HepG2 (cell line): ENCODE measurements at regions of chr5 and their contacts with region 1.

Region 1: DNA sequence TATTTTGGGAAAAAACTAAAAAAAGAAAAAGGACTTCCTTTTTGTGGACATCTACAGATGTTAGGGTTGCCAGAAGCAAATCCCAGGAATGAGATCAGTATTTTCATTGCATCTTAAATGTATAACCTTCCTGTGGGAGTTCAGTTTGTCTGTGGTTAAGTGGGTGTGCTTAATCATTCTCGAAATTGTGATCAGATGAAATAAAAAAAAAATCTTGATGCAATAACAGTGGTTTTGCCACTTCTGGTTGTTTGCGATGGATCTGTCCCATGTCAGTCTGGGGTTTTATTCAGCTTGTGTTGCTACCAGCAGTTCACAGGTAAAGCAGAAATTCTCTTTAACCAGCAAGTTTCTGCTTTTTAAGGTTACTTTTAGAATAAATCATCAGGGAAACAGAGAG is 179.0 kb downstream of the MAN2A1 start:
- DNase-seq: no peak
- ATAC-seq: no peak
- H3K4me3 ChIP-seq: no peak overlapping the region
- H3K27ac ChIP-seq: no peak overlapping the region
- H3K4me1 ChIP-seq: no peaks in the 10 kb centered on the region
- H3K27me3 ChIP-seq: no peaks in the 10 kb centered on the region
- CTCF ChIP-seq: no peak
- EP300 ChIP-seq: no peak
- POLR2A ChIP-seq: no peak
- RAD21 ChIP-seq: no peak

Region 2: GRCh38 chr5:109885205-109885604 is 16.5 kb after region 1 on chr5:
- CTCF ChIA-PET with region 1: no interaction called
- POLR2A ChIA-PET with region 1: no interaction called
- in situ Hi-C with region 1: no loop called
- intact Hi-C with region 1: loop called (anchors 1 kb)
- DNase-seq: no peak
- ATAC-seq: no peak
- H3K4me3 ChIP-seq: no peak overlapping the region
- H3K27ac ChIP-seq: no peak overlapping the region
- H3K4me1 ChIP-seq: peaks cover 15% of the 10 kb centered on the region
- H3K27me3 ChIP-seq: no peaks in the 10 kb centered on the region
- CTCF ChIP-seq: no peak
- EP300 ChIP-seq: no peak
- POLR2A ChIP-seq: no peak
- RAD21 ChIP-seq: no peak